ENCODE measurements at regions of chr16 and their contacts with region 1.

Region 1: DNA sequence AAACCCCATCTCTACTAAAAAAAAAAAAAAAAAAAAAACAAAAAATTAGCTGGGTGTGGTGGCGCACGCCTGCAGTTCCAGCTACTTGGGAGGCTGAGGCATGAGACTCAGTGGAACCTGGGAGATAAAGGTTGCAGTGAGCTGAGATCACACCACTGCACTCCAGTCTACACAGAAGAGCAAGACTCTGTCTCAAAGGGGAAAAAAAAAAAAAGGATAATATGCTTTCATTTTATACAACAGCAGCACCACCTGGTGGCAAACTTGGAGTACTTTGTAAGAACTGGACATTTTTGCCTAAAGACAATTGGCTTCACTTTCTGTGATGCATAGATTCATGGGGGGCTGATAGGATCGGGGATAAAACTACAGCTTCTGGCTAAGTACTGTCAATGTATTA is 8.5 kb downstream of the CHTF8 start:
- DNase-seq: peak; percentile 68
- CTCF ChIP-seq: peak; percentile 67

Region 2: DNA sequence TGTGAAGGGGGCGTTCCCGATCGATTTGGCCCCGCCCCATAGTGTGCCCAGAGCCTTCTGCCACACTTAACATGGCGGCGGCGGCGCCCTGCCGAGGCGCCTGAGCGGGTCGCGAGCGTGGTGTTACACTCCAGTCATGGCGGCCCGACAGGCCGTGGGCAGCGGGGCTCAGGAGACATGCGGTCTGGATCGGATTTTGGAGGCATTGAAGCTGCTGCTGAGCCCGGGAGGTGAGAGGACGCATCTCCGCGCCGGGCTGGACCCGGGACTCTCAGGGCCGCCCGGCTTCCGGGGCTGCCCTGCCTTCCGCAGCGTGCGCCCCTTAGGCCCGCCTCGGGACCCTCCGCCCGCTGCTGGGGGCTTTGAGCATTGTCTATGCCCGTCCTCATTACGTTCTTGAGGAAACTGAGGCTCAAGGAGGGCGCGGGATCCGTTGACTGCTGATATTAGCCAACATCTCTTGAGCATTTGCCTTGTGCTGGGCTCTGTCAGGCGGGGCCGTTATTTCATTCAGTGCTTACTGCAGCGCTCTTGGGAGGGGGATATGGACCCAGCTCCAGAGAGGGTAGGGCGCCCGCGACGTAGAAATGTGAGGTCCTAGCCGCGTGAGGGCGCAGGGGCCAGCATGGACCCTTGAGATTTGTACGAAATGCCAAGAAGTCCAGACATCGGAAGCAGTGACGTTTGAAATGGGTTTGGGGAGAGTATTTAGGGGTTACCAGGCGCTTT is 280.3 kb before region 1 on chr16 and contains the start of gene TANGO6:
- CTCF ChIA-PET with region 1: interaction called, 32 read pairs
- POLR2A ChIA-PET with region 1: no interaction called
- DNase-seq: peak; percentile 91
- CTCF ChIP-seq: peak; percentile 38

Region 3: GRCh38 chr16:68902008-68902968 is 221.6 kb before region 1 on chr16:
- CTCF ChIA-PET with region 1: interaction called, 35 read pairs
- POLR2A ChIA-PET with region 1: no interaction called
- DNase-seq: peak; percentile 29
- CTCF ChIP-seq: peak; percentile 40

Region 4: GRCh38 chr16:69107316-69107962 is 16.5 kb before region 1 on chr16:
- CTCF ChIA-PET with region 1: interaction called, 60 read pairs
- POLR2A ChIA-PET with region 1: interaction called, 3 read pairs
- DNase-seq: no peak
- CTCF ChIP-seq: no peak

Measured in GM10248 (cell line).